ENCODE measurements at regions of chr7 and their contacts with region 1.

Region 1: GRCh38 chr7:137996871-137997270 is 5.0 kb downstream of the CREB3L2 start:
- DNase-seq: no peak
- H3K4me3 ChIP-seq: peak overlapping the region in 1 of 3 experiments; percentile 65
- H3K4me3 Mint-ChIP-seq: peak overlapping the region; percentile 67 to 87
- H3K27ac ChIP-seq: peak overlapping the region in 1 of 2 donors; percentile 58
- H3K27ac Mint-ChIP-seq: peak overlapping the region in 6 of 7 donors; percentile 6 to 84 (median 61)
- H3K4me1 ChIP-seq: peaks cover 42 to 49% of the 10 kb centered on the region in 2 donors
- H3K4me1 Mint-ChIP-seq: peaks cover 60% of the 10 kb centered on the region
- H3K27me3 ChIP-seq: no peaks in the 10 kb centered on the region
- H3K27me3 Mint-ChIP-seq: peaks cover 0 to 2% (median 0%) of the 10 kb centered on the region in 3 donors
- CTCF ChIP-seq: no peak

Region 2: DNA sequence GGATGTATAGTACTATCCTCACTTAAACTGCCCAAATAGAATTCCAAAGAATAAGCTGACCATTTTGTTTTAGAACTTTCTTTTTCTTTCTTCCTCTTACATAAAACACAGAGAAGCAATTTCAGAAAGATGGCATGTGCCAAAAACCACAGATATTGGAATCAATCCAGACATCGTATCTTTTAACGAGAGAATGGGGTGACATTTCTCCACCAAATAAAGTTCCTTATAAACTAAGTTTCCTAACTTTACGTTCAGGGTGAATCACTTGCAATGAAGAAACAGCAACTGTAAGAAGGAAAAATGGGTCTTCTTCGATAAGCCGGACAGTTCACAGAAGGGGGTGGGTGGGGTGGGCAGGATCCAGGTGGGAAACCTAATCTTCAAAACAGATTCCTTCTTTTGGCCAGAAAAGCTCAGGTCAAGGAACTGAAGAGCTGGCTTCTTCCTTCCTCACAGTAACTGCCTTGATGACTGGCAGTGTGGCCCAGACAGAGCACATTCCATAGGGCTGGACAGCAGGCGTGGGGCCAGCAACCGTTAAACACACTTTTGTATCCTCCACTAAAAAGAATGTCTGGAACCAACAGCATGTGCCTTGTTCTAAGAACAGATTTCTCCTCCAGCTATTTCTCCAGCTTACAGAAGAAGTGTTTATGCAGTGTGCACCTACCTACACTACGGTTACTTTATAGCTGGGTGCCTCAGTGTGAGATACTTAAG is 26.5 kb before region 1 on chr7:
- intact Hi-C with region 1: loop called in 1 of 2 experiments (anchors 1 kb)
- DNase-seq: peak in 1 of 3 donors; percentile 16
- H3K4me3 ChIP-seq: no peak overlapping the region
- H3K4me3 Mint-ChIP-seq: no peak overlapping the region
- H3K27ac ChIP-seq: peak overlapping the region in 1 of 2 donors; percentile 12
- H3K27ac Mint-ChIP-seq: peak overlapping the region in 3 of 7 donors; percentile 21 to 47 (median 46)
- H3K4me1 ChIP-seq: peaks cover 9 to 31% of the 10 kb centered on the region in 2 donors
- H3K4me1 Mint-ChIP-seq: peaks cover 43% of the 10 kb centered on the region
- H3K27me3 ChIP-seq: no peaks in the 10 kb centered on the region
- H3K27me3 Mint-ChIP-seq: no peaks in the 10 kb centered on the region
- CTCF ChIP-seq: no peak

Measured in CD14-positive monocyte (primary cell).